PC-3 (cell line): ENCODE measurements at regions of chr1 and their contacts with region 1.

Region 1: DNA sequence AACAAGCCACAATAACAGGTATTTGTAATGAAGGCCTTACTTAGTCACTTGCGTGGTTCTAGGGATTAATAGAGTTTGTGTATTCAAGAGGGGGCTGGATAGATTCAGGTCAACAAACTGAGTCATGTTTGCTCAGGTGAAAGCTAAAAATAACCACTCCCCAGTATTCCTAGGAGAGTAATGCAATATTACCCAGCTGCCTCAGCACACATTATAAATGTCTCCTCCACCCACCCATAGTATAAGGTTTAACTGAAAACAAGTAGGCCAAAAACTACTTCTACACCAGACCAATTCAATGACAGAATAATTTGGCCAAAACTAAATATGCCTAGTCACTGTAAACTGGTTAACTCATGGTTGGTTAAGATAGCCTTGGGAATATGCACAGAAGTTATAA is 34.4 kb downstream of the WLS start:
- DNase-seq: peak; percentile 94
- ATAC-seq: peak; percentile 96
- H3K4me3 ChIP-seq: peak overlapping the region; percentile 19; the same call in 1 of the 2 replicates
- H3K27ac ChIP-seq: peak overlapping the region; percentile 93
- H3K4me1 ChIP-seq: peaks cover 47% of the 10 kb centered on the region
- H3K27me3 ChIP-seq: no peaks in the 10 kb centered on the region
- CTCF ChIP-seq: no peak

Region 2: GRCh38 chr1:68173911-68174737 is 23.8 kb before region 1 on chr1:
- CTCF ChIA-PET with region 1: no interaction called
- POLR2A ChIA-PET with region 1: interaction called, 4 read pairs
- intact Hi-C with region 1: loop called (anchors 2 kb)
- DNase-seq: peak; percentile 85
- ATAC-seq: peak; percentile 50
- H3K4me3 ChIP-seq: peak overlapping the region; percentile 44
- H3K27ac ChIP-seq: 0 out of 2 replicates have a peak overlapping the region, but pooled peaks have one; percentile 13
- H3K4me1 ChIP-seq: peaks cover 57% of the 10 kb centered on the region
- H3K27me3 ChIP-seq: no peaks in the 10 kb centered on the region
- CTCF ChIP-seq: no peak

Region 3: DNA sequence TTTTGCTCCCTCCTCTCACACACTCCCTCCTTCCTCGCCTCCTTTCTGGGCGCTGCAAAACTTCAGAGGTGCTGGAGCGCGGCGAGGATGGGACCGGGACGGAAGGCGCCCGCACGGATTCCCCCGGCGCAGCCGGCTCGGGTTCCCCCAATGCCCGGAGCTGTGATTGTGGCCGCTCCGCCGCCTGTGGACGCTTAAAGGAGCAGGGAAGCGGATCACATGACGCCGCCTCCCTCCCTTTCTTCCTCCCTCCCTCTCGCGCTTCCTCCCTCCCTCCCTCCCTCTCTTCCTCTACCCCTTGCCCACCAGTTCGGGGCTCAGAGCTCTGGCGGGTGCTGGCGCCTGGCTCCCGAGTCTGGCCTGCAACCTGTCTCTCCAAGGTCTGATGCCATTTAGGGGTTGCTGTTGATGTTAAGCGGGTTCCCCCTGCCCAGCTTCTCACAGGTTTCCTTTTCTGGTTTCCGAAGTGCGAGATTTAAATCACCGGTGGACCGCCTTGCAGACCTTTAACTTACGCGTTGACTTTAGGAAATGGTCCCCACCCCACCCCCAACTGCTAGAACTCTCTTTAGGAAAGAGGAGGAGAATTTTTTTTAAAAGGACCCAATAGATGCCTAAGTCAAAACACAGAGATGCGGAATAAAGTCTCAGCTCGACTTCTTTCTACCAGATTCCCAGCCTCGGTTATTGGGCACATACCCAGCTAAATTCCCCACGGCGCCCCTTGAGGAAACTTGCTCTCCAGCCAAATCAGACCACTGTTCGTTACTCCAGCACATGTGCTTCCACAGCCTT is 34.7 kb after region 1 on chr1 and contains the start of gene WLS:
- CTCF ChIA-PET with region 1: no interaction called
- POLR2A ChIA-PET with region 1: interaction called, 3 read pairs
- intact Hi-C with region 1: loop called (anchors 1 kb)
- DNase-seq: peak; percentile 66
- ATAC-seq: peak; percentile 75
- H3K4me3 ChIP-seq: peak within 1 kb of the TSS; percentile 93
- H3K27ac ChIP-seq: no peak within 1 kb of the TSS
- H3K4me1 ChIP-seq: peaks cover 25% of the 10 kb centered on the region; the same call in 1 of the 2 replicates
- H3K27me3 ChIP-seq: no peaks in the 10 kb centered on the region
- CTCF ChIP-seq: no peak
- total RNA-seq, gene WLS: 15.3 and 19.1 TPM in 2 replicates